Head of caudate nucleus (tissue), 42 donors: ENCODE measurements at regions of chr19 and their contacts with region 1.

Region 1: GRCh38 chr19:53808710-53809125 is 15.4 kb downstream of the NLRP12 start:
- DNase-seq: peak in 7 of 42 donors; percentile 3 to 54 (median 16)

Region 2: GRCh38 chr19:53792721-53793433 is 15.8 kb before region 1 on chr19:
- intact Hi-C with region 1: no loop called
- DNase-seq: peak; percentile 57 to 93 (median 85)

Region 3: GRCh38 chr19:54029930-54030490 is 221.3 kb after region 1 on chr19:
- intact Hi-C with region 1: loop called (anchors 10 kb)
- DNase-seq: peak; percentile 37 to 83 (median 68)

Region 4: DNA sequence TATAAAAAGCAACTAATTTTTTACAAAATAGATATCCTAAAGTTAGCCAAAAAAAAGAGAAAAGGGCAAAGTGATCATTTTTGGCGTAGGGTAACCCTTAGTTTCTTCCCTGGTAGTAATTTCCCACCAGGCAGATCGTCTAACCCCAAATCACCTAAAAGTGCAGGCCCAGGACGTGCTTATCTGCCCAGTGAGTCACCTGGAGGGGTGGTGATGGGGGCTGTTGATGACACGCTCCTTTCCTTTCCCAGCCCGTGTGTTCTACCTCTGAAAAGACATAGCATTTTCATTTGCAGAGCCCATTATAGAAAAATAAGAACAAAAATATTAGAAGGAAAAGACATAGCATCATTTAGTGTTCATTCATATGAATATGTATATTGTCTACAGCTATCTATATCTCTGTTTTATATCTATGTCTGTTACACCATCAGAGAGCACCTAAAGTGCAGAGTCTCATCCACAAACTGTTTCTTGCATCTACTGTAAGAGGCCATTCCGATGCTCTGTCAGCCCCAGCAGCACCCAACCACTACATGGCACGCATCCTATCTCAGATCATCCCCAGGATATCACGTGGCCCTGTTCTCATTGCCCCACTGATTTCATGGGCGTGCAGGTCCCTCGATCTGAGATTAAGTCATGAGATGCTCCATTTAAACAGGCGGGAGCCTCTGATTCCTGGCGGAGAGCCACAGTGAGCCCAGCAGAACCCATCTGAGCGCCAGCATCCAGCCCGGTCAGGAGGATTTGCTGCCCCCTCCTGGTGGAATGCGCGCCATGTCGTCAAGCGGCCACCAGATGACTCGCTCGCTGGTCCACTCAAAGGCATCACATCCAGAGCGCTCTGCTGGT is 422.6 kb after region 1 on chr19:
- intact Hi-C with region 1: no loop called
- DNase-seq: peak; percentile 74 to 96 (median 91)